Heart left ventricle (tissue), 16 donors: ENCODE measurements at regions of chr7 and their contacts with region 1.

Region 1: GRCh38 chr7:122896509-122896908 is 10.2 kb upstream of the CADPS2 start:
- DNase-seq: no peak
- ATAC-seq: no peak
- H3K4me3 ChIP-seq: no peak overlapping the region
- H3K27ac ChIP-seq: no peak overlapping the region
- H3K4me1 ChIP-seq: no peaks in the 10 kb centered on the region
- H3K27me3 ChIP-seq: peaks cover 0 to 6% (median 0%) of the 10 kb centered on the region in 9 donors
- CTCF ChIP-seq: no peak
- POLR2A ChIP-seq: no peak

Region 2: GRCh38 chr7:122847871-122848473 is 48.5 kb before region 1 on chr7:
- intact Hi-C with region 1: no loop called
- DNase-seq: peak in 2 of 5 donors; percentile 20 to 29
- ATAC-seq: peak; percentile 72 to 91 (median 80)
- H3K4me3 ChIP-seq: no peak overlapping the region
- H3K27ac ChIP-seq: peak overlapping the region in 10 of 12 donors; percentile 50 to 80 (median 60)
- H3K4me1 ChIP-seq: peaks cover 0 to 24% (median 6%) of the 10 kb centered on the region in 12 donors
- H3K27me3 ChIP-seq: no peaks in the 10 kb centered on the region
- CTCF ChIP-seq: no peak
- POLR2A ChIP-seq: no peak

Region 3: GRCh38 chr7:122951006-122951405 is 54.5 kb after region 1 on chr7:
- intact Hi-C with region 1: loop called in 1 of 10 experiments (anchors 10 kb)
- DNase-seq: no peak
- ATAC-seq: no peak
- H3K4me3 ChIP-seq: no peak overlapping the region
- H3K27ac ChIP-seq: no peak overlapping the region
- H3K4me1 ChIP-seq: no peaks in the 10 kb centered on the region
- H3K27me3 ChIP-seq: no peaks in the 10 kb centered on the region
- CTCF ChIP-seq: no peak
- POLR2A ChIP-seq: no peak